T-cell (primary cell): ENCODE measurements at regions of chr3 and their contacts with region 1.

Region 1: DNA sequence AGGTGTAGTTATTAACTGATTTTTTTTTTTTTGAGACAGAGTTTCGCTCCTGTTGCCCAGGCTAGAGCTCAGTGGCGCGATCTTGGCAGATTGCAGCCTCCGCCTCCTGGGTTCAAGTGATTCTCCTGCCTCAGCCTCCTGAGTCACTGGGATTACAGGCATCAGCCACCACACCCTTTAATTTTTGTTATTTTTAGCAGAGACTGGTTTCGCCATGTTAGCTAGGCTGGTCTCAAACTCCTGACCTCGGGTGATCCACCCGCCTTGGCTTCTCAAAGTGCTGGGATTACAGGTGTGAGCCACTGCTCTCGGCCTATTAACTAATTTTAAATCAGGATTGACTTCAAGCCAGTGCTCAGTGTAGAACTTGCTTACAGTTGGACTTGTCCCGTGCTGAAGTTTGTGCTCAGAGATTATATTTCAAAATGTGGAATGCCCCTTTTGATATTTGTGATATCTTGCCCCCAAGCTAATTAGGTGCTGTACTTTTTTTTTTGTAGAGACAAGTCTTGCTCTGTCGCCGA is 6.0 kb downstream of the SKIL start:
- DNase-seq: no peak
- ATAC-seq: no peak
- H3K4me3 ChIP-seq: no peak overlapping the region
- H3K4me3 Mint-ChIP-seq: peak overlapping the region in 1 of 3 donors; percentile 34
- H3K27ac ChIP-seq: no peak overlapping the region
- H3K27ac Mint-ChIP-seq: no peak overlapping the region
- H3K4me1 ChIP-seq: peaks cover 2 to 13% of the 10 kb centered on the region in 2 experiments
- H3K4me1 Mint-ChIP-seq: peaks cover 37 to 64% (median 57%) of the 10 kb centered on the region in 3 donors
- H3K27me3 ChIP-seq: no peaks in the 10 kb centered on the region
- H3K27me3 Mint-ChIP-seq: no peaks in the 10 kb centered on the region

Region 2: GRCh38 chr3:170154569-170155143 is 208.9 kb before region 1 on chr3:
- CTCF ChIA-PET with region 1: no interaction called
- POLR2A ChIA-PET with region 1: interaction called in 1 of 2 experiments, 15 read pairs
- DNase-seq: peak in 1 of 35 experiments; percentile 26
- ATAC-seq: peak; percentile 77 to 90 (median 84)
- H3K4me3 ChIP-seq: peak overlapping the region in 1 of 2 donors; percentile 19
- H3K4me3 Mint-ChIP-seq: peak overlapping the region; percentile 59 to 78 (median 61)
- H3K27ac ChIP-seq: peak overlapping the region; percentile 52
- H3K27ac Mint-ChIP-seq: peak overlapping the region; percentile 93 to 98
- H3K4me1 ChIP-seq: peaks cover 24 to 30% of the 10 kb centered on the region in 2 experiments
- H3K4me1 Mint-ChIP-seq: peaks cover 55 to 65% (median 57%) of the 10 kb centered on the region in 3 donors
- H3K27me3 ChIP-seq: no peaks in the 10 kb centered on the region
- H3K27me3 Mint-ChIP-seq: no peaks in the 10 kb centered on the region

Region 3: DNA sequence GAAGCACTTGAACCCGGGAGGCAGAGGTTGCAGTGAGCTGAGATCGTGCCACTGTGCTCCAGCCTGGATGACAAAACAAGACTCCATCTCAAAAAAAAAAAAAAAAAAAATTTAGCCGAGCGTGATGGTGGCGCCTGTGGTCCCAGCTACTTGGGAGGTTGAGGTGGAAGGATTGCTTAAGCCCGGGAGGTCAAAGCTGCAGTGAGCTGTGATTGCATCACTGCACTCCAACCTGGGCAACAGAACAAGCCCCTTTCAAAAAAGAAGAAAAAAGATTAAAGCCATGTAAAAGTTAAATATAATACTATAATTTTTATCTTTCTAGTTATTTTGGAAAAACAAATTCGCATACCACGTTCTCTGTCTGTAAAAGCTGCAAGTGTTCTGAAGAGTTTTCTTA is 67.9 kb before region 1 on chr3:
- CTCF ChIA-PET with region 1: no interaction called
- POLR2A ChIA-PET with region 1: no interaction called
- DNase-seq: no peak
- ATAC-seq: no peak
- H3K4me3 ChIP-seq: no peak overlapping the region
- H3K4me3 Mint-ChIP-seq: no peak overlapping the region
- H3K27ac ChIP-seq: no peak overlapping the region
- H3K27ac Mint-ChIP-seq: no peak overlapping the region
- H3K4me1 ChIP-seq: no peaks in the 10 kb centered on the region
- H3K4me1 Mint-ChIP-seq: no peaks in the 10 kb centered on the region
- H3K27me3 ChIP-seq: no peaks in the 10 kb centered on the region
- H3K27me3 Mint-ChIP-seq: no peaks in the 10 kb centered on the region

Region 4: GRCh38 chr3:170542704-170543103 is 179.2 kb after region 1 on chr3:
- CTCF ChIA-PET with region 1: no interaction called
- POLR2A ChIA-PET with region 1: interaction called in 1 of 2 experiments, 11 read pairs
- DNase-seq: no peak
- ATAC-seq: no peak
- H3K4me3 ChIP-seq: no peak overlapping the region
- H3K4me3 Mint-ChIP-seq: no peak overlapping the region
- H3K27ac ChIP-seq: no peak overlapping the region
- H3K27ac Mint-ChIP-seq: no peak overlapping the region
- H3K4me1 ChIP-seq: no peaks in the 10 kb centered on the region
- H3K4me1 Mint-ChIP-seq: no peaks in the 10 kb centered on the region
- H3K27me3 ChIP-seq: peaks cover 0 to 4% of the 10 kb centered on the region in 2 experiments
- H3K27me3 Mint-ChIP-seq: peaks cover 22 to 39% of the 10 kb centered on the region in 2 donors